GM12878 (cell line): ENCODE measurements at regions of chr14 and their contacts with region 1.

Region 1: GRCh38 chr14:62097072-62097471 is 334.9 kb downstream of the SNAPC1 start:
- DNase-seq: no peak
- ATAC-seq: peak; percentile 64
- H3K4me3 ChIP-seq: no peak overlapping the region
- H3K27ac ChIP-seq: no peak overlapping the region
- H3K4me1 ChIP-seq: no peaks in the 10 kb centered on the region
- H3K27me3 ChIP-seq: no peaks in the 10 kb centered on the region
- CTCF ChIP-seq: no peak
- EP300 ChIP-seq: no peak
- POLR2A ChIP-seq: no peak
- RAD21 ChIP-seq: no peak

Region 2: GRCh38 chr14:62110941-62111340 is 13.9 kb after region 1 on chr14:
- CTCF ChIA-PET with region 1: interaction called, 4 read pairs
- POLR2A ChIA-PET with region 1: interaction called, 4 read pairs
- RAD21 ChIA-PET with region 1: interaction called, 7 read pairs
- SMC1A ChIA-PET with region 1: interaction called, 15 read pairs
- in situ Hi-C with region 1: no loop called
- intact Hi-C with region 1: no loop called
- DNase-seq: no peak
- ATAC-seq: no peak
- H3K4me3 ChIP-seq: no peak overlapping the region
- H3K27ac ChIP-seq: no peak overlapping the region
- H3K4me1 ChIP-seq: no peaks in the 10 kb centered on the region
- H3K27me3 ChIP-seq: peaks cover 0 to 3% of the 10 kb centered on the region in 2 experiments; a peak in 1 of 4 replicates
- CTCF ChIP-seq: no peak
- EP300 ChIP-seq: no peak
- POLR2A ChIP-seq: no peak
- RAD21 ChIP-seq: no peak

Region 3: DNA sequence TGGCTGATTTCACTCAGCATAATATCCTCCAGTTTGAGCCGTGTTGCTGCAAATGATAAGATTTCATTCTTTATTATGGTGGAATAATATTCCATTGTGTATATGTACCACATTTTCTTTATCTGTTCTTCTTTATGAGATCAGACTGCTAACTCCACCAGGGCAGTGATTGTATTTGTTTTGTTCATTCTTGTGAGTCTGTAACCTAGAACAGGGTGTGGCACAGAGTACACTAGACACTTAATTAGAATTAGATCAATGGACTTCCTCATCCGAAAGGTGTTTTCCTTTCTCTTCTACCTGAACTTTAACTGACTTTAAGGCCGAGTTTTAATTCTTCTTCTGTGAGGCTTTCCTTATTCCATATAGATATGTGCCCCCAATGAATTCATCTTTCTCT is 216.1 kb after region 1 on chr14:
- CTCF ChIA-PET with region 1: no interaction called
- POLR2A ChIA-PET with region 1: no interaction called
- RAD21 ChIA-PET with region 1: no interaction called
- SMC1A ChIA-PET with region 1: no interaction called
- in situ Hi-C with region 1: no loop called
- intact Hi-C with region 1: no loop called
- DNase-seq: no peak
- ATAC-seq: no peak
- H3K4me3 ChIP-seq: no peak overlapping the region
- H3K27ac ChIP-seq: no peak overlapping the region
- H3K4me1 ChIP-seq: no peaks in the 10 kb centered on the region
- H3K27me3 ChIP-seq: no peaks in the 10 kb centered on the region; a peak in 1 of 4 replicates
- CTCF ChIP-seq: no peak
- EP300 ChIP-seq: no peak
- POLR2A ChIP-seq: no peak
- RAD21 ChIP-seq: no peak